Aorta (tissue), 5 donors: ENCODE measurements at regions of chr20 and their contacts with region 1.

Region 1: GRCh38 chr20:47272893-47273590 is 83.5 kb downstream of the ZMYND8 start:
- DNase-seq: no peak
- ATAC-seq: peak; percentile 85
- H3K4me3 ChIP-seq: no peak overlapping the region
- H3K27ac ChIP-seq: peak overlapping the region; percentile 32 to 88
- H3K4me1 ChIP-seq: peaks cover 2 to 5% of the 10 kb centered on the region in 2 donors
- H3K27me3 ChIP-seq: no peaks in the 10 kb centered on the region

Region 2: DNA sequence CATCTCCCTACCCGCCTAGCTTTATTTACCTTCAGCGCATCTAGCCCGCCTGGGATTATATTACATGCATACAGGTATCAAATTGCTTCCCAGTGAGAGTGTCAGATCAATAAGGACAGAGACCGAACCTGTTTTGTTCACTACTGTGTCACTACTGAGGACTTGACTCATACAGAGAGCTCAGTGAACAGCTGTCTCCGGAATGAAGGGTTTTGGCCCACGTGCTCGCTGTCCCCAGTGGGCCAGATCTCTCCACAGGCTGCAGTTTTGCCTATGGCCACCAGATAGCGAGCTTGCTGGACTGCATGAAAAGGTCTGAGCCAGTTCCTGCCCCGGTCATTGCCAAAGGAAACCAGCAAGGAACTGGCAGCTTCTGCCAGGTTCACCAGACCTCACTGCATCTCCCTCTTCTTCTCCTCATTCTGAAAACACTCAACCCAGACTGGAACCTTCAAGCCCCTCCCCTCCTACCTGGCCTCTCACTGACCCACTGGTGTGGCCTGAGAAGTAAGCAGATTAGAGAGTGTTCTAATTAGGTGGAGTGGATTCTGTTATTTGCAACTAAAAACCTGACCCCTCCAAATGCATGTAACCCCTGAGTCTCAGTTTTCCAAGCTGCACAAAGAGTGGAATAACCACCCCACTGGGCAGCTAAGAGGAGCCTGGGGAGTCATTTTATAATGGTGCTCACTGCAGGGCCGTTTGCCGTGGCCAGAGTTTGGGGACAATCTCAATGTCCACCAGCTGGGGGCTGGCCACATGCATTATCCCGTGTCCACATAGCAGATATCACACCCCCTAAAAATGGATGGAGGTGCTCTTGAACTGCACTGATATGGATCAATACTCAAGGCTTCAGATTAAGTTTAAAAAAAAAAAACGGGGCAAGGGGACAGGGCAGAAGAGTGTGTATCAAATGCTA is 67.2 kb before region 1 on chr20:
- intact Hi-C with region 1: loop called in 1 of 2 experiments (anchors 5 kb)
- DNase-seq: peak in 1 of 2 donors; percentile 91
- ATAC-seq: peak; percentile 59
- H3K4me3 ChIP-seq: no peak overlapping the region
- H3K27ac ChIP-seq: no peak overlapping the region
- H3K4me1 ChIP-seq: no peaks in the 10 kb centered on the region
- H3K27me3 ChIP-seq: no peaks in the 10 kb centered on the region

Region 3: DNA sequence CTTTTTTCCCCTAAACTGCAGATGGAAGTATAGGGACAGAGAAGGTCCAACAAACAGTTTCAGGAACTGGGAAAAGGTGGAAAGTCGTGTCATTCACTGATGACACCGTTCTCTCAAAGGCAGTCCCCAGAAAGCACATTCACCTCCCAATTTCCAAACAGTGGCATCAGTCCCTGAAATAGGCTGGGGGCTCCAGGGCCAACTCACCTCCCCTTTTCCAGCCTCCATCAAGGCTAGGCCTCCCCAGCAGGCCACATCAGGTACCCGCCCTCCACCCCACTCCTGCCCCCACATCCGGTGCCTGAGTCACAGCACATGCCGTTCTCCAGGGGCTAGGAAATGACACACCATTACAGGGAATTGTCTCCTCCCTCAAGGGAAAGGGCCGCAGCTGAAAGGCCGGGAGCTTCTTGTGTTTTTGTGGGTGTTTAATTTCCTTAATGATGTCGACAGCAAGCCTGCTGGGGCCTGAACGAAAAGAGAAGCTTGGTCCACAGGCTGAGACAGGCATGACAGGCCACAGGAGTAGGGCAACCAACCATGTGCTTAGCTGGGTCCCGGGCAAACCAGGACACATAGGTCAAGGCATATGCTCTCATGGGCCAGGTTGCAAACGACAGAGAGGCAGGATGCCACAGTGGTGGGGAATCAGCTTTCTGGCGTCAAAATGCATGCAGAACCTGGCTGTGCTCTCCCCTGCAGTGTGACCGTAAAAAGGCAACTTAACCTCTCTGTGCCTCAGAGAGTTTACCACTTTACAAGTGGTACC is 44.3 kb after region 1 on chr20:
- intact Hi-C with region 1: loop called (anchors 2 to 5 kb)
- DNase-seq: peak; percentile 91 to 95
- ATAC-seq: peak; percentile 75
- H3K4me3 ChIP-seq: no peak overlapping the region
- H3K27ac ChIP-seq: peak overlapping the region; percentile 99
- H3K4me1 ChIP-seq: no peaks in the 10 kb centered on the region
- H3K27me3 ChIP-seq: no peaks in the 10 kb centered on the region

Region 4: GRCh38 chr20:47379433-47380150 is 106.5 kb after region 1 on chr20:
- intact Hi-C with region 1: loop called (anchors 1 to 2 kb)
- DNase-seq: no peak
- ATAC-seq: no peak
- H3K4me3 ChIP-seq: no peak overlapping the region
- H3K27ac ChIP-seq: no peak overlapping the region
- H3K4me1 ChIP-seq: no peaks in the 10 kb centered on the region
- H3K27me3 ChIP-seq: no peaks in the 10 kb centered on the region

Region 5: DNA sequence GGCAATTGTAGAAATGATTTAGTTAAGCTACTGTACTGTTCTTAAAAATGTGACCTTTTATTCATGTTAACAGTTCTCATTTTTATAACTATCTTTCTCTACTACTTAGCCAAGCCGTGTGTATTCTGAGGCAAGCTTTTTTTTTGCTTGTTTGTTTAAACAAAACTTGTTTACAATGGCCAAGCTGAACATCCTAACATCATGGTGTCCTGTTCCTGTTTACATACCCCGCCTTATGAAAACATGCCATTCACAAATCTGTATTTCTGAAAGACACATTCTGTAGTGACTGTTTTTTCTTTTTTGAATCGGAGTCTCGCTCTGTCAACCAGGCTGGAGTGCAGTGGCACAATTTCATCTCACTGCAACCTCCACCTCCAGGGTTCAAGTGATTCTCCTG is 369.6 kb after region 1 on chr20:
- intact Hi-C with region 1: loop called in 1 of 2 experiments (anchors 10 kb)
- DNase-seq: no peak
- ATAC-seq: no peak
- H3K4me3 ChIP-seq: no peak overlapping the region
- H3K27ac ChIP-seq: no peak overlapping the region
- H3K4me1 ChIP-seq: peaks cover 0 to 6% of the 10 kb centered on the region in 2 donors
- H3K27me3 ChIP-seq: no peaks in the 10 kb centered on the region